ENCODE measurements at regions of chr4 and their contacts with region 1.

Region 1: DNA sequence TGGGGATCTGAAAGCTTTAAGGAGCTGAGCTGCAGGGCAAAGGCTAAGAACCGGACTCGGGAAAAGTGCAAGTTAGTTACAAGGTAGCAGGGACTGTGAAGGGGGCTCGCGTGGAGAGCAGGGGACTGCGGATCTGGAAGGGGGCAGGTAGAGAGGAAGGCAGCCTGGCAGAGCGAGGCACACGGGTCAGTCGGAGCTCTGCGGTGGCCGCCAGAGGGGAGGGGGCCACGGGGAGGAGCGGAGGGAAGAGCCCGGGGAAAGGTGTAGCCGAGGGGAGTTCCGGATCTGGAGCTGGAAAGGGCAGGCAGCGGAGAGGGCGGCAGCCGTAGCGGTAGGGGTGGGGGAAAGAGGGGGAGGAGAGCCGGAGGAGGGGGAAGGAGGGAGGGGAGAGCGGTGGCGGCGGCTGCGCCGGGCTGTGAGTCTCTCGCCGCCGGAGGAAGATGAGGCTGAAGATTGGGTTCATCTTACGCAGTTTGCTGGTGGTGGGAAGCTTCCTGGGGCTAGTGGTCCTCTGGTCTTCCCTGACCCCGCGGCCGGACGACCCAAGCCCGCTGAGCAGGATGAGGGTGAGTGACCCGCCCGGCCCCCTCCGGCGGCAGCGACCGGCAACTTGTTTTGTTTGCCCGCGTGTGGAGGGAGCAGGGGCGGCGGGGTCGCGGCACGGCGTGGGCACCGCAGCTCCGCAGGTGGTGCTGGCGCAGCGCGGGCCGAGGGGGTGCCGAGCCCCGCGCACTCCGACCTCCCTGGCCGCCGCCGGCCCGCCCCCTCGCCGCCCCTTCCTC is at the start of gene GALNT7:
- DNase-seq: peak; percentile 85 to 92 (median 87)
- ATAC-seq: peak; percentile 82
- H3K4me3 ChIP-seq: peak within 1 kb of the TSS; percentile 67
- H3K27ac ChIP-seq: peak within 1 kb of the TSS; percentile 91
- H3K4me1 ChIP-seq: peaks cover 20 to 33% of the 10 kb centered on the region in 2 experiments; a peak in 4 of 5 replicates
- H3K27me3 ChIP-seq: no peaks in the 10 kb centered on the region
- CTCF ChIP-seq: no peak
- EP300 ChIP-seq: no peak
- POLR2A ChIP-seq: peak; percentile 87
- RAD21 ChIP-seq: no peak
- polyA plus RNA-seq, gene GALNT7: 16.7 to 26.1 TPM

Region 2: DNA sequence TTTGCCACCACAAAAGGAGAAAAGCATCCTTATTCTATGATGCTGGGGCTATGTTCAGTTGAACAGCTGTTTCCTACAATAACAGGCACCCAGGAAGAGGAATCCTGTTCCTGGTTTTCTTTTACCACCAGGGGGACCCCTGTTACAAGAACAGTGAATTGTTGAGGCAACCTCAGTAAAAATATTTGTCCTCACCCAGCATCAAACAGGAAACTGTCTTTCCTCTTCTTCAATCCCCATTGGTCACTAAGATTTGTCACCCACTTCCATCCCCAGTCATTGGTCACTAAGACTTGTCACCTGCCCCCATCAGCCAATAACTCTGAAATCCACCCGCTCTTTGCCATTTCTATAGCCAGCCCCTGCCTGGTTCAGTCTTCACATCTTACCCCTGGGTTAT is 143.5 kb before region 1 on chr4:
- CTCF ChIA-PET with region 1: no interaction called
- POLR2A ChIA-PET with region 1: no interaction called
- in situ Hi-C with region 1: loop called (anchors 5 kb)
- intact Hi-C with region 1: loop called (anchors 1 kb)
- DNase-seq: peak; percentile 52 to 77 (median 58)
- ATAC-seq: peak; percentile 95
- H3K4me3 ChIP-seq: no peak overlapping the region
- H3K27ac ChIP-seq: no peak overlapping the region
- H3K4me1 ChIP-seq: no peaks in the 10 kb centered on the region
- H3K27me3 ChIP-seq: no peaks in the 10 kb centered on the region
- CTCF ChIP-seq: peak; percentile 72 to 87 (median 73)
- EP300 ChIP-seq: no peak
- POLR2A ChIP-seq: no peak
- RAD21 ChIP-seq: peak; percentile 87 to 93

Region 3: DNA sequence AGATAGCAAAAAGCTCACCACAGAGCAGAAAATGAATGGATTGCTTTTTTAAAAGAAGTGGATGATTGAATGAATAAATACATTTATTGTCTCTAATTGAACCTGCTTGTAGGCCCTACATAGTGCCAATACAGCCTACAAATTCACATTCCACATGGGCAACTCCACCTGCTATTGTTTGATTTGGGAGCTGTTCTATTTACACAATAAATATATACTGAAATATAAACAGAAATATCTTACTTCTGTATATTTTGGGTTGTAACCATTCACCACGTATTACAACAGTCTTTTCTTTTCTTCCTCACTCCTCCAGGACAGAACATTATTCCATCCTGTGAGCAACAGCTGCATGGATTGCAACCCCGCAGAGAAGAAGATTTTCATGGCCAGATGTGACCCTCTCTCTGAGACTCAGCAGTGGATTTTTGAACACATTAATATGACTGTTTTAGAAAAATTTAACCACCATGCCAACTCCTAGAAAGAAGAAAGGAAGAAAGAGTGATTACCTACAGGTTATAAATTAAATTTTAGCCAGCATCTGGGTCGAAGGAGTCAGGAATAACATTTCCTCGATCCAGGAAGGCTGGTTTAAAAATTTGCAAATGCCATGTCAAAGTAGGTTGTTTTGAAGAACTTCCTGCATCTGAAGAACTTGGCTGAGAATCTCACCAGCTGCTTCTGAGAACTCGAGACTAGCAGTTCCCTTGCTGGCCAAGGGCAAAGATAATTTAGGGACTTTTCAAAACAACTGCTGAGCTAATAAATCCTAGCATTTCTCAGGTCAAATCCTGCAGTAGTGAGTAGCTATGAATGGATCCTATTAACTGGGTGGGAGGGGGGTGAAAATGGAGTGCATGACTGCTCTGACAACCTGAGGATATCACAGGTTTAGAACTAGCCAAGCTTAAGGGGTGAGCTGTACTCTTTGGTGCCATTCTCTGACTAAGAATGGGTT is 128.7 kb before region 1 on chr4:
- CTCF ChIA-PET with region 1: no interaction called
- POLR2A ChIA-PET with region 1: no interaction called
- in situ Hi-C with region 1: no loop called
- intact Hi-C with region 1: loop called (anchors 5 kb)
- DNase-seq: no peak
- ATAC-seq: peak; percentile 65
- H3K4me3 ChIP-seq: no peak overlapping the region
- H3K27ac ChIP-seq: no peak overlapping the region
- H3K4me1 ChIP-seq: no peaks in the 10 kb centered on the region; a peak in 1 of 5 replicates
- H3K27me3 ChIP-seq: no peaks in the 10 kb centered on the region
- CTCF ChIP-seq: no peak
- EP300 ChIP-seq: no peak
- POLR2A ChIP-seq: no peak
- RAD21 ChIP-seq: no peak

Region 4: DNA sequence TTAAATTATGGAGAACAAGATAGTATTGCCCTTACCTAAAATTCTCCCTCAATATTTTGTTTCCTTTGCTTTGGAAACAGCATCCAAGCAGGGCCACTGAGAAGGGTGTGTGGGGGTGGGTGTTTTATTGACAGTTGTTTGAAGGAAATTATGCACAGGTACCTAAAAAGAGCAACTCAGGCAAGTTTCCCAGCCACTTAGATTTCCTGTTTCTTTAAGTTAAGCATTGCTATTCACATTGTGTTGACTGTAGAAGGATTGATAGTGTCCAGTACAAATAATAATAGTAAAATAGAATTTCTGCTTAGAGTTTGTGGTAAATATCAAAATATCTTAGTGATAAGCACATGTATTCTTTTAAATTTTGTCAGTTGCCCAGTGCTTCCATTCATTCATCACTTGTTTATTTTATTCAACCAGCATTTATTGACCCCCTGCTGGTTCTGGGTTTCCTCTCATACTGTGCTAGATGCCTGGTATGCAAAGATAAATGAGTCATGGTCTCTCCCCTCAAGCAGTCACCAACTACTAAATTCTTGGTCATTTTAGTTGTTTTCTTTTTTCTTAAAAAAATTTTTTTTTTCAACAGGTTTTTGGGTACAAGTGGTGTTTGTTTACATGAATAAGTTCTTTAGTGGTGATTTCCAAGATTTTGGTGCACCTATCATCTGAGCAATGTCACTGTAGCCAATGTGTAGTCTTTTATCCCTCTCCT is 50.0 kb after region 1 on chr4:
- CTCF ChIA-PET with region 1: no interaction called
- POLR2A ChIA-PET with region 1: no interaction called
- in situ Hi-C with region 1: no loop called
- intact Hi-C with region 1: loop called (anchors 5 kb)
- DNase-seq: peak; percentile 59 to 88 (median 69)
- ATAC-seq: peak; percentile 88
- H3K4me3 ChIP-seq: peak overlapping the region; percentile 7; the same call in 1 of the 2 replicates
- H3K27ac ChIP-seq: peak overlapping the region; percentile 84
- H3K4me1 ChIP-seq: peaks cover 11 to 40% of the 10 kb centered on the region in 2 experiments
- H3K27me3 ChIP-seq: no peaks in the 10 kb centered on the region
- CTCF ChIP-seq: no peak; a peak in 1 of 6 replicates
- EP300 ChIP-seq: peak; percentile 92
- POLR2A ChIP-seq: no peak
- RAD21 ChIP-seq: no peak

Region 5: GRCh38 chr4:173231916-173232315 is 63.3 kb after region 1 on chr4:
- CTCF ChIA-PET with region 1: no interaction called
- POLR2A ChIA-PET with region 1: no interaction called
- in situ Hi-C with region 1: no loop called
- intact Hi-C with region 1: loop called (anchors 2 kb)
- DNase-seq: peak; percentile 24 to 66 (median 46)
- ATAC-seq: peak; percentile 90
- H3K4me3 ChIP-seq: no peak overlapping the region
- H3K27ac ChIP-seq: peak overlapping the region; percentile 24; the same call in 2 of the 3 replicates
- H3K4me1 ChIP-seq: peaks cover 0 to 24% of the 10 kb centered on the region in 2 experiments; a peak in 3 of 5 replicates
- H3K27me3 ChIP-seq: no peaks in the 10 kb centered on the region
- CTCF ChIP-seq: peak; percentile 49 to 73 (median 61); a peak in 5 of 6 replicates
- EP300 ChIP-seq: no peak
- POLR2A ChIP-seq: no peak
- RAD21 ChIP-seq: peak; percentile 43 to 66; a peak in 3 of 4 replicates

Region 6: DNA sequence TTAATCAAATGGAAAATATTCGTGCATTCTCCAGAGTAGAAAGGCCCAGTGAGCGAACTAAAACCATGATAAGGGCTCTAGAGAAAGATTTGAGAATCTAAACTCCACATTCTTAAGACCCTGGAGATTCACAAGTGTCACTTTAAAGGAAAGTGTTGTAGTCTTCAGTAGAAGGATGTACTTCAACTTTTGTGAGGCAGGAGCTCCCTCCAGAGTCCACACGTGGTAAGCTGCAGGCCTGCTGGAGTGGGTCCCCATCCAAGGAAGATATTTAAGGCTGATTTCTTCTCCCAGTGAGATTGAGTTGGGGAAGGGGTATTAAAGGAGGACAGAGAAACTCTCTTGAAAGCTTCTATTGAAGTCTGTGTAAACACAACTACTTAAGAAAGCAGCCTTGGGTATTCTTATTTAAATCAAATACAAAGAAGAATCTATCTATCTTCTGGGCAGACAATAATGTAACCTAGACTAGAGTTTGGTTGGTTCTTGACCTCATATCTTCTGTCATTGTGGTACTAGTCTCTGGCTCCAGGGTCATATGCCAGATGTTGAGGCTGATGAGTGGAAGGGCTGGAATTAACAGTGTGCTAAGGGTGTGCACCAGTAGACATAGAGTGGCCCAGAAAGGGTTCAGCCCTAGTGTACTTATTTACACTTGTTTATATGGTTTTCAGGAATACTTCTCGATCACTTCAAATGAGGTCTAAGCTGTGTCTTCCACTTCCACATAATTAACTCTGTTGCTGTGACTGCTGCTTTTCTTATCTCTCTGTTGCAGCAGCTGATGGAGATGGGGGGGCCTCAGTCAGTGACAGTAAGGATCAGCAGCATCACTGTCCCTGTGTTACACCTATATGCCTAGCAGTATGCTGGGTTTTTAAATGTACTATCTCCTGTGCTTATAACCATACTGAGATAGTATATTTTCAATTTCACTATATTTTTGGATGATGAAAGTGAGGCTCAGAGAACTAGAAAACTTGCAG is 89.4 kb after region 1 on chr4:
- CTCF ChIA-PET with region 1: no interaction called
- POLR2A ChIA-PET with region 1: no interaction called
- in situ Hi-C with region 1: no loop called
- intact Hi-C with region 1: loop called (anchors 1 kb)
- DNase-seq: peak; percentile 48 to 77 (median 56)
- ATAC-seq: peak; percentile 96
- H3K4me3 ChIP-seq: no peak overlapping the region
- H3K27ac ChIP-seq: no peak overlapping the region
- H3K4me1 ChIP-seq: peaks cover 0 to 10% of the 10 kb centered on the region in 2 experiments; a peak in 3 of 5 replicates
- H3K27me3 ChIP-seq: no peaks in the 10 kb centered on the region
- CTCF ChIP-seq: peak; percentile 75 to 86 (median 85)
- EP300 ChIP-seq: peak; percentile 54; the same call in 1 of the 2 replicates
- POLR2A ChIP-seq: no peak
- RAD21 ChIP-seq: peak; percentile 84 to 85

Region 7: GRCh38 chr4:173301518-173302201 is 133.1 kb after region 1 on chr4:
- CTCF ChIA-PET with region 1: no interaction called
- POLR2A ChIA-PET with region 1: no interaction called
- in situ Hi-C with region 1: no loop called
- intact Hi-C with region 1: loop called (anchors 5 kb)
- DNase-seq: peak; percentile 18 to 57 (median 19)
- ATAC-seq: peak; percentile 63
- H3K4me3 ChIP-seq: no peak overlapping the region
- H3K27ac ChIP-seq: no peak overlapping the region
- H3K4me1 ChIP-seq: no peaks in the 10 kb centered on the region
- H3K27me3 ChIP-seq: no peaks in the 10 kb centered on the region
- CTCF ChIP-seq: peak; percentile 43 to 83 (median 58); a peak in 5 of 6 replicates
- EP300 ChIP-seq: no peak
- POLR2A ChIP-seq: no peak
- RAD21 ChIP-seq: peak; percentile 73 to 75

Measured in K562 (cell line).